ENCODE measurements at regions of chr22 and their contacts with region 1.

Region 1: GRCh38 chr22:30485362-30485988 is 13.7 kb upstream of the SEC14L3 start:
- DNase-seq: peak; percentile 82
- ATAC-seq: peak; percentile 99
- H3K4me3 Mint-ChIP-seq: no peak overlapping the region
- H3K27ac Mint-ChIP-seq: no peak overlapping the region
- H3K4me1 Mint-ChIP-seq: no peaks in the 10 kb centered on the region
- H3K27me3 Mint-ChIP-seq: peaks cover 2% of the 10 kb centered on the region
- CTCF ChIP-seq: peak; percentile 97

Region 2: DNA sequence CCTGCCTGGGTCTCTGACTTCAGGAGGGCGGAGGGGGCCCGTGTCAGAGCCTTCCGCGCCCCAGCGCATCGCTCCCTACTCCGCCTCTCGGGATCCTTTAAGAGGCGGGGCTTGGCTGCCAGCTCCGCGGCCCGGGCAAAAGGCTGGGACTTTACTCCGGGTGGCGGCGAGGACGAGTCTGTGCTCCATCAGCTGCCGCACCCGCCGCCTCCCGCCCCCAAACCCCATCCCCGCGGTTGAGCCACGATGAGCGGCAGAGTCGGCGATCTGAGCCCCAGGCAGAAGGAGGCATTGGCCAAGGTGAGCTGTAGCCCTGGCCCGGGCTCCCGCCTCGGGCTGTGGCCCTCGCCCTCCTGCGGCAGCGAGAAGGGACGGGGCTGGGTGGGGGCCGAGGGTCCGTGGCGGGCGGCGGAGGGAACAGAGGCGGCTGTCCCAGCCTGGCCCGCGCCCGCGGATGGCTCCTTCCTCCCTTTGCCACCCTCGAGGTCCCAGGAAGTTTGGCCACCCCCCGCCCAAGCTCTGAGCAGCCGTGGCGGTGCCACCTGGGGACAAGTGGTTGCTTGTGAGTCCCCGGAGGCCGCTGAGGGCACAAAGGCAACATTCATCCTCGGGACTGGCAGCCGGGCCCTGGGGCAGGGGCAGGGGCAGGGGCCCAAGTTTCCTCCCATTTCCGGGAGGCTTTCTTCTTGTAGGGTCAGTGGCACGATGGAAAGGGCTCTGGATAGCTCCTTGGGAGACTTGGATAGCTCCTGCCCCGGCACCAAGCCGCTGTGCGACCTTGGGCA is 88.4 kb before region 1 on chr22 and contains the start of gene SEC14L2:
- CTCF ChIA-PET with region 1: interaction called, 59 read pairs
- POLR2A ChIA-PET with region 1: interaction called, 3 read pairs
- intact Hi-C with region 1: no loop called
- DNase-seq: peak; percentile 75
- ATAC-seq: peak; percentile 83
- H3K4me3 Mint-ChIP-seq: peak within 1 kb of the TSS; percentile 85
- H3K27ac Mint-ChIP-seq: peak within 1 kb of the TSS; percentile 74
- H3K4me1 Mint-ChIP-seq: peaks cover 45% of the 10 kb centered on the region
- H3K27me3 Mint-ChIP-seq: no peaks in the 10 kb centered on the region
- CTCF ChIP-seq: no peak
- total RNA-seq, gene SEC14L2: 15.1 to 15.4 TPM

Region 3: GRCh38 chr22:30444632-30445437 is 40.6 kb before region 1 on chr22:
- CTCF ChIA-PET with region 1: interaction called, 36 read pairs
- POLR2A ChIA-PET with region 1: no interaction called
- intact Hi-C with region 1: no loop called
- DNase-seq: peak; percentile 80
- ATAC-seq: peak; percentile 85
- H3K4me3 Mint-ChIP-seq: no peak overlapping the region
- H3K27ac Mint-ChIP-seq: peak overlapping the region; percentile 27
- H3K4me1 Mint-ChIP-seq: peaks cover 21% of the 10 kb centered on the region
- H3K27me3 Mint-ChIP-seq: peaks cover 37% of the 10 kb centered on the region
- CTCF ChIP-seq: peak; percentile 80

Region 4: GRCh38 chr22:30474683-30475424 is 10.6 kb before region 1 on chr22:
- CTCF ChIA-PET with region 1: interaction called, 11 read pairs
- POLR2A ChIA-PET with region 1: interaction called, 3 read pairs
- intact Hi-C with region 1: no loop called
- DNase-seq: peak; percentile 37
- ATAC-seq: no peak
- H3K4me3 Mint-ChIP-seq: no peak overlapping the region
- H3K27ac Mint-ChIP-seq: no peak overlapping the region
- H3K4me1 Mint-ChIP-seq: no peaks in the 10 kb centered on the region
- H3K27me3 Mint-ChIP-seq: peaks cover 6% of the 10 kb centered on the region
- CTCF ChIP-seq: no peak